CD4-positive, alpha-beta T cell (primary cell): ENCODE measurements at regions of chrX and their contacts with region 1.

Region 1: GRCh38 chrX:149504915-149505651 is at the start of gene IDS:
- DNase-seq: peak; percentile 69 to 95 (median 84)
- ATAC-seq: peak; percentile 64
- H3K4me3 ChIP-seq: peak within 1 kb of the TSS; percentile 82
- H3K4me3 Mint-ChIP-seq: peak within 1 kb of the TSS; percentile 99
- H3K27ac ChIP-seq: peak within 1 kb of the TSS; percentile 87 to 97
- H3K27ac Mint-ChIP-seq: peak within 1 kb of the TSS; percentile 95
- H3K4me1 ChIP-seq: peaks cover 45% of the 10 kb centered on the region
- H3K4me1 Mint-ChIP-seq: peaks cover 35% of the 10 kb centered on the region
- H3K27me3 ChIP-seq: no peaks in the 10 kb centered on the region
- H3K27me3 Mint-ChIP-seq: peaks cover under 1% of the 10 kb centered on the region
- CTCF ChIP-seq: no peak
- total RNA-seq, gene IDS: 256 to 260 TPM

Region 2: GRCh38 chrX:147911192-147912022 is 1593.7 kb before region 1 on chrX and contains the start of gene FMR1:
- CTCF ChIA-PET with region 1: no interaction called
- POLR2A ChIA-PET with region 1: interaction called, 3 read pairs
- intact Hi-C with region 1: loop called in 1 of 2 experiments (anchors 10 kb)
- DNase-seq: peak; percentile 87 to 97 (median 93)
- ATAC-seq: peak; percentile 85
- H3K4me3 ChIP-seq: peak within 1 kb of the TSS; percentile 98
- H3K4me3 Mint-ChIP-seq: peak within 1 kb of the TSS; percentile 99
- H3K27ac ChIP-seq: peak within 1 kb of the TSS; percentile 85
- H3K27ac Mint-ChIP-seq: peak within 1 kb of the TSS; percentile 88
- H3K4me1 ChIP-seq: peaks cover 6% of the 10 kb centered on the region
- H3K4me1 Mint-ChIP-seq: peaks cover 51% of the 10 kb centered on the region
- H3K27me3 ChIP-seq: no peaks in the 10 kb centered on the region
- H3K27me3 Mint-ChIP-seq: no peaks in the 10 kb centered on the region
- CTCF ChIP-seq: no peak
- total RNA-seq, gene FMR1: 87.9 to 95.3 TPM

Region 3: DNA sequence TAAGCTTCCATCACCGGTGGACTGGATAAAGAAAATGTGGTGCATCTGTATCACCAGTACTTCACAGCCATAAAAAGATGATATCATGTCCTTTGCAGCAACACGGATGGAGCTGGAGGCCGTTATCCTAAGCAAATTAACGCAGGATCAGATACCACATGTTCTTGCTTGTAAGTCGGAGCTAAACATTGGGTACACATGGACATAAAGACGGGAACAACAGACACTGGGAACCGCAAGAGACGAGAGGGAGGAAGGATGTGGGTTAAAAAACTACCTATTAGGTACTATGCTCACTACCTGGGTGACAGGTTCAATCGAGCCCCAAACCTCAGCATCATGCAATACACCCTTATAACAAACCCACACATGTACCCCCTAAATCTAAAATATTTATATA is 16.4 kb after region 1 on chrX:
- CTCF ChIA-PET with region 1: no interaction called
- POLR2A ChIA-PET with region 1: interaction called, 9 read pairs
- intact Hi-C with region 1: loop called (anchors 2 kb)
- DNase-seq: peak in 4 of 14 experiments; percentile 40 to 74 (median 66)
- ATAC-seq: peak; percentile 11
- H3K4me3 ChIP-seq: no peak overlapping the region
- H3K4me3 Mint-ChIP-seq: peak overlapping the region; percentile 73
- H3K27ac ChIP-seq: peak overlapping the region in 1 of 2 donors; percentile 25
- H3K27ac Mint-ChIP-seq: peak overlapping the region; percentile 59
- H3K4me1 ChIP-seq: peaks cover 49% of the 10 kb centered on the region
- H3K4me1 Mint-ChIP-seq: peaks cover 43% of the 10 kb centered on the region
- H3K27me3 ChIP-seq: no peaks in the 10 kb centered on the region
- H3K27me3 Mint-ChIP-seq: no peaks in the 10 kb centered on the region
- CTCF ChIP-seq: no peak

Region 4: DNA sequence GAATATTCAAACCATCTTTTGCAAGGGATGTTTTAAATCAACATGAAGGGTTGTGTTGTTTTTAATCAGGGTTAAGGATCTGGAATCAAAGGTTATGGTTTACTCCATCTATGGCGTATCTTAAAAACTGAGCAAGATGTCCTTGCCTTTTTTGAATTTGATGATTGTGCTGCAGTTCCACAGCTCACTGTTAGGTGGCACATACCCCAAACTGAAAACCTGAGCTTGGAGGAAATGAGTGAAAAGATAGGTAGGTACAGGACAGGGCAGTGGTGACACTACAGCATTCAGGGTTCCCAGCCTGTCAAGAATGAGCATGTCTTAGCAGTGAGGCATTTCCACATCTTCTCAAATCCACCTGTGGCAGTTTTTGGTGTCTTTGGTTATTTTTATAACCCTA is 22.6 kb after region 1 on chrX:
- CTCF ChIA-PET with region 1: interaction called, 6 read pairs
- POLR2A ChIA-PET with region 1: interaction called, 5 read pairs
- intact Hi-C with region 1: loop called in 1 of 2 experiments (anchors 2 kb)
- DNase-seq: peak in 4 of 14 experiments; percentile 56 to 78 (median 70)
- ATAC-seq: peak; percentile 25
- H3K4me3 ChIP-seq: no peak overlapping the region
- H3K4me3 Mint-ChIP-seq: peak overlapping the region; percentile 38
- H3K27ac ChIP-seq: no peak overlapping the region
- H3K27ac Mint-ChIP-seq: peak overlapping the region; percentile 82
- H3K4me1 ChIP-seq: peaks cover 36% of the 10 kb centered on the region
- H3K4me1 Mint-ChIP-seq: peaks cover 25% of the 10 kb centered on the region
- H3K27me3 ChIP-seq: no peaks in the 10 kb centered on the region
- H3K27me3 Mint-ChIP-seq: no peaks in the 10 kb centered on the region
- CTCF ChIP-seq: peak; percentile 37

Region 5: GRCh38 chrX:149539283-149540130 is 34.4 kb after region 1 on chrX:
- CTCF ChIA-PET with region 1: interaction called, 3 read pairs
- POLR2A ChIA-PET with region 1: interaction called, 58 read pairs
- intact Hi-C with region 1: no loop called
- DNase-seq: peak; percentile 77 to 96 (median 85)
- ATAC-seq: peak; percentile 52
- H3K4me3 ChIP-seq: peak overlapping the region; percentile 65
- H3K4me3 Mint-ChIP-seq: peak overlapping the region; percentile 89
- H3K27ac ChIP-seq: peak overlapping the region; percentile 56 to 58
- H3K27ac Mint-ChIP-seq: peak overlapping the region; percentile 96
- H3K4me1 ChIP-seq: peaks cover 16% of the 10 kb centered on the region
- H3K4me1 Mint-ChIP-seq: peaks cover 8% of the 10 kb centered on the region
- H3K27me3 ChIP-seq: no peaks in the 10 kb centered on the region
- H3K27me3 Mint-ChIP-seq: no peaks in the 10 kb centered on the region
- CTCF ChIP-seq: no peak

Region 6: DNA sequence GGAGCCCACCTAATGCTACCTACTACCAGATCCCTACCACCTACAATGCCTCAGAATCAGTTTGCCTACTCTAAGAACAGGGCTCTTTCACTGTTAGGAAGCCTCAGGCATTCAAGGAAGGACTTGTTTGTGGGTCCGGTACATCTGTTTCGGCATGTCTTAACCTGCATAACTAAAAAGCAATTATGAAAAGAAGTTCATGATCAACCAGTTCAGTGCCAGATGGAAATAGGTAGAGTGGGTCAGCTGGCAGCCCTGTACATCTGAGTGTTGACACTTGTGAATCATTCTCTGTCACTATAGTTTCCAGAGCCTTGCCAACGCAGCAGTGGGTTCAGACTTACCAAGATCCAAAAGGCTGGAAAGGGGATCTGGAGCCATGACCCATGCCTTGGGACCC is 123.2 kb after region 1 on chrX:
- CTCF ChIA-PET with region 1: no interaction called
- POLR2A ChIA-PET with region 1: no interaction called
- intact Hi-C with region 1: loop called in 1 of 2 experiments (anchors 5 kb)
- DNase-seq: no peak
- ATAC-seq: no peak
- H3K4me3 ChIP-seq: no peak overlapping the region
- H3K4me3 Mint-ChIP-seq: no peak overlapping the region
- H3K27ac ChIP-seq: no peak overlapping the region
- H3K27ac Mint-ChIP-seq: no peak overlapping the region
- H3K4me1 ChIP-seq: peaks cover 25% of the 10 kb centered on the region
- H3K4me1 Mint-ChIP-seq: peaks cover 64% of the 10 kb centered on the region
- H3K27me3 ChIP-seq: no peaks in the 10 kb centered on the region
- H3K27me3 Mint-ChIP-seq: no peaks in the 10 kb centered on the region
- CTCF ChIP-seq: no peak

Region 7: DNA sequence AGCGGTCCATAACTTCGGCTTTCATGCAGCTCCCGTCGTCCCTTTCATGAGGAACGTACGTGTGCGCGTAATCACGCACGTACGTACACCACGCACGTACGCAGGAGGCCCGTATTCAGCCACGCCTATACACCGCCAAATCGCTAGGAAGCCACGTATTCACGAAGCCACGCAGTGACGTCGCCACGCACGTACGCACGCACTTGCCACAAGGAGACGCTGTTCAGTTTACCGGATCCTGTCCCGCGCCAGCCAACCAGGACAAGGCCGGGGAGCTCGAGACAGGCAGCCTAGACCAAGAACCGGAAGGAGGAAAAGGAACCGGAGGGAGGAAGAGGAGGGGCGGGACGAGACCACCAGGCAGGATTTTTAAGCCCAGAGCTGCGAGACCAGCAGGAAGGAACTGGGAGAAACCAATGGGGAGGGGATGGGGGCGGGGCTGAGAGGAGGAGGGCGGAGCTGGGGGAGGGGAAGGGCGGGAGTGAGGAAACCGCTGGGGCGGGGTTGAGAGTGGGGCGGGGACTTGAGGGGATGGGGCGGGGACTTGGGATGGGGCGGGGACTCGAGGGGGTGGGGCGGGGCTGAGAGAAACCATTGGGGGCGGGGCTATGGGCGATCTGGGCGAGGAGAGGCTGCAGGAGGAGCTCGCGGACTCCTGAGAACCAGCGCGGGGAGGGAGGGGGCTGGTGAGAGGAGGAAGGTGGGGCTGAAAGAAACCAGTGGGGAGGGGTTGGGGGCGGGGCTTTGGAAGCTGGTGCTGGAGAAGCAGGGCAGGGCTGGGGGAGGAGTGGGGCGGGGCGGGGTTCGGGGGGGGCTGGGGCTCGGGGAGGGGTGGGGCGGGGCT is 433.6 kb after region 1 on chrX and contains the start of gene EOLA2:
- CTCF ChIA-PET with region 1: no interaction called
- POLR2A ChIA-PET with region 1: interaction called, 18 read pairs
- intact Hi-C with region 1: no loop called
- DNase-seq: peak; percentile 83 to 98 (median 90)
- ATAC-seq: peak; percentile 47
- H3K4me3 ChIP-seq: peak within 1 kb of the TSS; percentile 93
- H3K4me3 Mint-ChIP-seq: peak within 1 kb of the TSS; percentile 94
- H3K27ac ChIP-seq: peak within 1 kb of the TSS; percentile 82 to 97
- H3K27ac Mint-ChIP-seq: peak within 1 kb of the TSS; percentile 84
- H3K4me1 ChIP-seq: peaks cover 15% of the 10 kb centered on the region
- H3K4me1 Mint-ChIP-seq: no peaks in the 10 kb centered on the region
- H3K27me3 ChIP-seq: no peaks in the 10 kb centered on the region
- H3K27me3 Mint-ChIP-seq: no peaks in the 10 kb centered on the region
- CTCF ChIP-seq: peak; percentile 34
- total RNA-seq, gene EOLA2: 48.7 to 54.7 TPM